ENCODE measurements at regions of chr12 and their contacts with region 1.

Region 1: DNA sequence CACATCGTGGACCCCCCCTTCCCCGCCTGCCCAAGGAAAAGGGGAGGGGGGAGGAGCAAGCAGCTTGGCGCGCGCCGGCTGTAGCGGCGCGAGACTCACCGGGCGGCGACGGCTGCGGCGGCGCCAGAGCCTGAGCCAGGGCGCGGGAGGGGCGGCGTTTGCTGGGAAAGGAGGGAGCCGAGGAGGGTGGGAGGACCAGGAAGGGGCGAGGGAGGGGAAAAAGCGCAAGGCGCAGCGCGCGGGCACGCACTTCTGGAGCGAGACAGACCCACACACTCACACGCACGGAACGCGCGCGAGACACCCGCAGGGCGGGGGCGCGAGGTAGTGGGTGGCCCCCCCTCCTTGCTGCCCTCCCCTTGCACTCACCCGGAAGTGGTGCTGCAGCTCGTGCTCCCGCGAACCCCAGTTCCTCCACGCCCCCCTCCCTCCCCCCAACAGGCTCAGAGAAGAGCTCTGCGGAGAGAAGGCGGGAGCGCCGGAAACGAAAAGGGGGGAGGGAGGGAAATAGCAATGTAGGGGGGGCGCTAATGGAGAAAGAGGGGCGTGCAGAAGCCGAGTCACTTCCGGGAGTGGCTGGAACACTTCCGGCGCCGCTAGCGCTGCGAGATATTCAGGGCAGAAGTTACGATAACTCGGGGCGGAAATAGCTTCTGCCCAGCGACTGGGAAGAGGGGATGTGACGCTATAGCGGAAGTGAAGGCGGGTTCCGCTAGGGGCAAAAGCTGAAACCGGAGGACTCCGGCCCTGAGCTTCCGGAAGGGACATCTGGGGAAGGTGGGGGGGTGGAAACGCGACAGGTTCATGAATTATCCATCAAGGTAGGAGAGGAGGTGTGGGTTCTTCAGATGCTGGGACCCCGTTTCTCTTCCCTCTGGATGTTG is at the start of gene ZNF384:
- DNase-seq: peak; percentile 96
- ATAC-seq: peak; percentile 84
- H3K4me3 Mint-ChIP-seq: peak within 1 kb of the TSS; percentile 86
- H3K27ac Mint-ChIP-seq: peak within 1 kb of the TSS; percentile 92
- H3K4me1 Mint-ChIP-seq: peaks cover 41% of the 10 kb centered on the region
- H3K27me3 Mint-ChIP-seq: no peaks in the 10 kb centered on the region
- total RNA-seq, gene ZNF384: 61.4 to 79.0 TPM

Region 2: GRCh38 chr12:6493497-6494257 is 195.6 kb before region 1 on chr12 and contains the start of gene NCAPD2:
- CTCF ChIA-PET with region 1: no interaction called
- POLR2A ChIA-PET with region 1: interaction called, 5 read pairs
- intact Hi-C with region 1: loop called in 1 of 2 experiments (anchors 1 kb)
- DNase-seq: peak; percentile 98
- ATAC-seq: peak; percentile 89
- H3K4me3 Mint-ChIP-seq: peak within 1 kb of the TSS; percentile 94
- H3K27ac Mint-ChIP-seq: peak within 1 kb of the TSS; percentile 98
- H3K4me1 Mint-ChIP-seq: peaks cover 35% of the 10 kb centered on the region
- H3K27me3 Mint-ChIP-seq: no peaks in the 10 kb centered on the region
- total RNA-seq, gene NCAPD2: 199 to 210 TPM

Region 3: GRCh38 chr12:6570264-6570887 is 118.9 kb before region 1 on chr12:
- CTCF ChIA-PET with region 1: interaction called, 5 read pairs
- POLR2A ChIA-PET with region 1: interaction called, 5 read pairs
- intact Hi-C with region 1: loop called (anchors 1 to 5 kb)
- DNase-seq: peak; percentile 76
- ATAC-seq: no peak
- H3K4me3 Mint-ChIP-seq: peak overlapping the region; percentile 89
- H3K27ac Mint-ChIP-seq: peak overlapping the region; percentile 66
- H3K4me1 Mint-ChIP-seq: peaks cover 62% of the 10 kb centered on the region
- H3K27me3 Mint-ChIP-seq: no peaks in the 10 kb centered on the region

Region 4: DNA sequence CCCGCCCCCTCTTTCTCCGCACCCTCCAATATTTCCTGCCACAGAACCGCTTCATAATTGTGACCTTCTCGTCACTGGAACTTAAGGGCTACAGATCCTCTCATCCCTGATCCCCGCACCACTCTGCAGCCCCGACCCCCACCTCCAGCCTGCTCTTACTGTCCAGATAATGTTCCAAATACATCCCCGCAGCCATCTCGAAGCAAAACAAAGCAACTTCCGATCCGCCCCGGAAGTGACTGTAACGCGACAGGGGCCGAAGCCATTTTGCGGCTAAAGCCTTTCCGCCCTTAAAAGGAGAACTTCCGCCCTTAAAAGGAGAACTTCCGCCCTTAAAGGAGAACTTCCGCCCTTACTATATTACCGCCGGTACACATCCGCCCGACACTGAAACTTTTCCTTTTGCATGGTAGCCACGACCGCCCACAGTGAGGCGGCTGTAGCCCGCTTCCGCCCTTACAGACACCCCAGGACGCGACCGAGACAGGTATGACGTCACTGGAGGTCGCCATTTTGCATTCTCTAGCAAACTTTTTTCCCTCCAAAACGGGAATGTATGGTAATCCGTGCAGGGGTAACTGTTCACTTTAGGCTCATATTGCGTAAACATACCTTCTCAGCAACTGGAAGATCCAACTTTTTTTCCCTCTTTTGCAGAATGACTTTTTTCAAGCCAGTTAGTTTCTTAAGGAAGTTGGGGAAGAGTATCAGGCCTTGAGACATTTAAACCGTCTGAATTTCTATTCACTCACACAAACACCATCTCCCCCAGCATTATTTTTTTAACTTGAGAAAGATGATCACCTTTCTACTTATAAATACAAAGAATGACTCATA is 26.1 kb before region 1 on chr12 and contains the start of gene ING4:
- CTCF ChIA-PET with region 1: interaction called, 15 read pairs
- POLR2A ChIA-PET with region 1: interaction called, 3 read pairs
- intact Hi-C with region 1: loop called (anchors 1 kb)
- DNase-seq: peak; percentile 98
- ATAC-seq: peak; percentile 98
- H3K4me3 Mint-ChIP-seq: peak within 1 kb of the TSS; percentile 84
- H3K27ac Mint-ChIP-seq: peak within 1 kb of the TSS; percentile 91
- H3K4me1 Mint-ChIP-seq: peaks cover 24% of the 10 kb centered on the region
- H3K27me3 Mint-ChIP-seq: no peaks in the 10 kb centered on the region
- total RNA-seq, gene ING4: 14.9 to 17.6 TPM

Region 5: GRCh38 chr12:6778574-6779550 is 89.6 kb after region 1 on chr12:
- CTCF ChIA-PET with region 1: interaction called, 6 read pairs
- POLR2A ChIA-PET with region 1: no interaction called
- intact Hi-C with region 1: loop called (anchors 1 to 5 kb)
- DNase-seq: peak; percentile 95
- ATAC-seq: peak; percentile 59
- H3K4me3 Mint-ChIP-seq: peak overlapping the region; percentile 72
- H3K27ac Mint-ChIP-seq: peak overlapping the region; percentile 84
- H3K4me1 Mint-ChIP-seq: peaks cover 91% of the 10 kb centered on the region
- H3K27me3 Mint-ChIP-seq: peaks cover 5% of the 10 kb centered on the region

Region 6: DNA sequence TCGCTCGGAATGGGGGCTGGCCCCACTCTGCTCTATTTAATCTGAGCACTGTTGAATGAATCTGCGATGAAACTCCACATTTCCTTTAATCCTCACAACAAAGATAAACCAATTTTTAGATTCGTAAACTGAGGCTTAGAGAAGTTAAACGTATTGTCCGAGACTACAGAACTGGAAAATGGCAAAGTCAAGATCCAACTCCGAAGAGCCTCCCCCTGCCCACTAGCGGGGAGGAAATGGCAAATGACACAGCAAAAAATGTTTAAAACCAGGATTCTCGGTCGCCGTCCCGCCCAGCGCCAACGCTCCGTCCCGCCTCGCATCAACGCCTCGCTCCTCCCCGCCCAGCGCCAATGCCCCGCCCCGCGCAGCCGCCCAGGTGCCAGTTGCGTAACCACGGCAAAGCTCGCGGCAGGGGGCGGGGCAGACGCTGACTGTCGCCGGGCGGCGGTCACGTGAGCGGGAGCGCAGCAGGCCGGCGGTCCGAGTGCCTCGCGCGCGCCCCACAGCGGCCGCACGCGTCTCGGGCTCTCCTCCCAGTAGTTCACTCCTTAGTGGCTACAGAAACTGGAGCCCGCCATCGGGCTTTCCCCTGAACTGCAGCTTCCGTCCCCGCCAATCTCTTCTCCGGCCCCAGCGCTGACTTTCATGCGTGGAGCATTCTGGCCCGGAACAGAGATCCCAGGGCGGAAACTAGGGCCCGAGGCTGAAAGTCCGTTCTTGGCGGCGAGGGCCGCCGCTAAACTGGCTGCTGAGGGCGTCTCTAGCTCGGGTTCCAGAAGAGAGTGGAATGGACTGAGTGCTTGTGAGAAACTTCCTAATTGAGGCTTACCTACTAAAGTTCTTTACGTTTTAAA is 201.8 kb after region 1 on chr12:
- CTCF ChIA-PET with region 1: no interaction called
- POLR2A ChIA-PET with region 1: interaction called, 7 read pairs
- intact Hi-C with region 1: loop called in 1 of 2 experiments (anchors 1 kb)
- DNase-seq: peak; percentile 100
- ATAC-seq: peak; percentile 94
- H3K4me3 Mint-ChIP-seq: peak overlapping the region; percentile 87
- H3K27ac Mint-ChIP-seq: peak overlapping the region; percentile 94
- H3K4me1 Mint-ChIP-seq: peaks cover 12% of the 10 kb centered on the region
- H3K27me3 Mint-ChIP-seq: no peaks in the 10 kb centered on the region